Activated CD4-positive, alpha-beta T cell treated with anti-CD3 and anti-CD28 coated beads for 36 hours (primary cell): ENCODE measurements at regions of chr13 and their contacts with region 1.

Region 1: GRCh38 chr13:20249913-20250312 is 17.8 kb upstream of the GJB6 start:
- DNase-seq: no peak
- ATAC-seq: no peak
- H3K4me3 Mint-ChIP-seq: no peak overlapping the region
- H3K27ac Mint-ChIP-seq: no peak overlapping the region
- H3K4me1 Mint-ChIP-seq: no peaks in the 10 kb centered on the region
- H3K27me3 Mint-ChIP-seq: peaks cover 4% of the 10 kb centered on the region

Region 2: DNA sequence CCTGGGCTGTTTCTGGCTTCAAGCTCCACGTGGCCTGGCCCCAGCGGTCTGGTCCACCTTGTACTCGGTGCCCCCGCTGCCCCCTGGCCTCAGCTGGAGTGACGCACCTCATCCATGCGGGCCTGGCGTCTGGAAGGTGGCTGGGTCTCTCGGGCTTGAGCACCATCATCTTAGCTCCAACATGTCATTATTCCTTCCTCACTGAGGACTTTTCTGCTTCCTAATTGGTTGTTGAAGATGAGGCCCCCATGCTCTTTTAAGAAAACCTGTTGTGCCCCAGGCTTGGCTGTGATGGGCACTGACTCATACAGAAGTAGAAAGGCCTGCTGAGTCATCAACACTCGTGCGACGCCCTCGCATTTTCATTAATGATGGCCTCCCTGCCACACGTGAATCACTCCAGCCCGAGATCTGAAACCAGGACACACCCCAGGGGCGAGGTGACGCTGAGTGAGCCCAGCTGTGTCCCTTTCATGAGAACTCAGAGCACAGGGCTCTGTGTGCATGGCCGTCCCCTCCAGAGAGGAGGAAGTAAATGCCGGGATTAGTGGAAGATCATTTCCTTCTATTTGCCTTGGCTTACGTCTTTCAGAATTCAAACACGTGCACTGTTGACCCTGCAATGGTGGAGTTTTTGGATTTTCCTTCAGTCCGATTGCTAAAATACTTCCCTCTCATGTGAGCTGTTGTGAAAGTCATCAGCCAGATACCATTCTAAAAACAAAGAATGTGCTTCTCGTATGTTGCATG is 75.1 kb before region 1 on chr13:
- CTCF ChIA-PET with region 1: no interaction called
- POLR2A ChIA-PET with region 1: no interaction called
- intact Hi-C with region 1: no loop called
- DNase-seq: peak; percentile 84
- ATAC-seq: peak; percentile 92
- H3K4me3 Mint-ChIP-seq: peak overlapping the region; percentile 7
- H3K27ac Mint-ChIP-seq: no peak overlapping the region
- H3K4me1 Mint-ChIP-seq: peaks cover 30% of the 10 kb centered on the region
- H3K27me3 Mint-ChIP-seq: peaks cover 68% of the 10 kb centered on the region

Region 3: GRCh38 chr13:20475927-20476691 is 226.2 kb after region 1 on chr13:
- CTCF ChIA-PET with region 1: no interaction called
- POLR2A ChIA-PET with region 1: interaction called, 10 read pairs
- intact Hi-C with region 1: no loop called
- DNase-seq: peak; percentile 86
- ATAC-seq: peak; percentile 92
- H3K4me3 Mint-ChIP-seq: peak overlapping the region; percentile 67
- H3K27ac Mint-ChIP-seq: peak overlapping the region; percentile 92
- H3K4me1 Mint-ChIP-seq: peaks cover 40% of the 10 kb centered on the region
- H3K27me3 Mint-ChIP-seq: no peaks in the 10 kb centered on the region